ENCODE measurements at regions of chr1 and their contacts with region 1.

Region 1: DNA sequence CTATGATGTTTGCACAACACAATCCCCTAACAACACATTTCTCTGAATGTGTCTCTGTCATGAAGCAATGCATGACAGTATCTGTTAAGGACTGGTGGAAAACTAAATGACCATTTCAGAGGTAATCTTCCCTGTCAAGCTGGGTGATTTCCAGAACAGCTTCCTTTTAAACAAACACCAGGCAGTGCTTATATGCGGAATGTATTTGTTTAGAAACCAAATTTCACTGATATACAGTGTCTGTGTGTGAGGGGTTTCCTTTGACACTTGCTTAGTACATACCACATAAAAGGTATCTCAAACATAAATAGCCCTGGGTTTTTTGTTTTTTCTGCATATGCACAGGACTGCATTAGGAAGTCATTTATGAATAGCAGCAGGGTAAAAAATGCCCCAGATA is 95.6 kb downstream of the TGFBR3 start:
- DNase-seq: no peak
- ATAC-seq: no peak
- H3K4me3 ChIP-seq: no peak overlapping the region
- H3K27ac ChIP-seq: no peak overlapping the region
- H3K4me1 ChIP-seq: peaks cover 13% of the 10 kb centered on the region
- H3K27me3 ChIP-seq: no peaks in the 10 kb centered on the region
- CTCF ChIP-seq: no peak

Region 2: GRCh38 chr1:91693557-91693956 is 96.8 kb before region 1 on chr1:
- CTCF ChIA-PET with region 1: no interaction called
- POLR2A ChIA-PET with region 1: no interaction called
- in situ Hi-C with region 1: no loop called
- intact Hi-C with region 1: no loop called
- DNase-seq: no peak
- ATAC-seq: no peak
- H3K4me3 ChIP-seq: no peak overlapping the region
- H3K27ac ChIP-seq: peak overlapping the region; percentile 5; the same call in 1 of the 2 replicates
- H3K4me1 ChIP-seq: no peaks in the 10 kb centered on the region
- H3K27me3 ChIP-seq: no peaks in the 10 kb centered on the region
- CTCF ChIP-seq: no peak

Region 3: DNA sequence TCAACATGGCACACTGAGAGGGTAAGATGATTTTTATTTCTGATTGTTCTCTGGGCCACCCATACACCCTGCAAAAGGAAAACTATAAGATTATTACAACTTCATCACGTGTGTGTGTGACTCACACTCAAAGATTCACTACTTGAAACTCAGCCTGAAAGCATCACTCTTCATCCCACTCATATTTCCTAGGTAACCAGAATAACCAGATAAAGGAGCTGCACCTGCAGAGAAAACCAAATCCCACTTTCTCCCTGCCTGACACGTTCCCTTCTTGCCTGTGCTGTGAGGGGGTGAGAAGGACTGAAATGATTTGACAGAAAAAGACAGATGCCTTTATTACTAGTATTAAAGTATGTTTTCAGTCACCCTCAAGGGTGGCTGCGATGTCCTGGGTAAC is 36.0 kb before region 1 on chr1:
- CTCF ChIA-PET with region 1: no interaction called
- POLR2A ChIA-PET with region 1: no interaction called
- in situ Hi-C with region 1: no loop called
- intact Hi-C with region 1: no loop called
- DNase-seq: no peak
- ATAC-seq: no peak
- H3K4me3 ChIP-seq: no peak overlapping the region
- H3K27ac ChIP-seq: no peak overlapping the region
- H3K4me1 ChIP-seq: peaks cover 12% of the 10 kb centered on the region; the same call in 1 of the 2 replicates
- H3K27me3 ChIP-seq: no peaks in the 10 kb centered on the region
- CTCF ChIP-seq: no peak

Region 4: GRCh38 chr1:91770667-91771268 is 19.6 kb before region 1 on chr1:
- CTCF ChIA-PET with region 1: no interaction called
- POLR2A ChIA-PET with region 1: interaction called, 17 read pairs
- in situ Hi-C with region 1: no loop called
- intact Hi-C with region 1: no loop called
- DNase-seq: no peak
- ATAC-seq: no peak
- H3K4me3 ChIP-seq: no peak overlapping the region
- H3K27ac ChIP-seq: no peak overlapping the region
- H3K4me1 ChIP-seq: no peaks in the 10 kb centered on the region
- H3K27me3 ChIP-seq: no peaks in the 10 kb centered on the region
- CTCF ChIP-seq: no peak

Region 5: DNA sequence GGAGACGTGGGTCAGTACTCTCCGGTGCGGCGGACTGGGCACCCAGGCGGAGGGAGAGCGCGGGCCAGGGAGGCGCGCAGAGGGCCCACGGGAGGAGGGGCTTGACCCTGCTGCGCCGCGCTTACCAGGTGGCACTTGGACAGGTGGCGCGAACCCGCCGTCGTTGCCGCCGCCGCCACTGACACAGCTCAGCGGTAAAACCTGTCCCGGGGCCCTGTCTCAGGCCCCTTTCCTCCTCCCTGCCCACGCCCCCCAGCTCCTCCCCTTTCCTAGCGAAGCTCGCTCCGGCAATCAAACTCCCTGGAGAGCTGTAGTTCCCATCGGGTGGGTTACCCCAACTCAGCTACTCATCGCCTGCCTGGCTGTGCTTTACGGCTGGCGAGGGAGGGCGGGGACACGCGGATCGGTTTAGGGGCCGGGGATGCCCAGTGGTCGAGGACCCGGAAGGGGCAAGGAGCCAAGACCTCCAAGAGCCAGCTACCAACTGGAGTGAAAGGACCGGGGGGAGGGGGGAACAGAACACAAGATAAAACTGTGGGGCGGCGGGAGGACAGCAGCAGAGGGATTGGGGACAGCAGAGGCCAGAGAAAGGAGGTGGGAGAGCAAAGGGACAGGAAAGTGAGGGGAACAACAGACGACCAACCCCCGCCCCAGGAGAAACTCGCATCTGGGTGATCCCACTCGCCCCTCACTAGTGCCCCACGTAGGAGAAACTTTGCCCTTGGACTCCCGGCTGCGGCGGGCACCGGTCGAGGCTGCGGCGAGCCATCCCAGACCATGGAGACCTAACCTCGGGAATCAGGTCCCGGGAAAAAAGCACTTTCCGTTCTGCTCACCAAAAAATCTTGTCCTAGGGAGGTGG is 693.4 kb after region 1 on chr1:
- CTCF ChIA-PET with region 1: no interaction called
- POLR2A ChIA-PET with region 1: interaction called, 14 read pairs
- in situ Hi-C with region 1: no loop called
- intact Hi-C with region 1: no loop called
- DNase-seq: no peak
- ATAC-seq: peak; percentile 20; the same call in 1 of the 2 replicates
- H3K4me3 ChIP-seq: peak overlapping the region; percentile 37 to 52
- H3K27ac ChIP-seq: no peak overlapping the region
- H3K4me1 ChIP-seq: peaks cover 2% of the 10 kb centered on the region; the same call in 1 of the 2 replicates
- H3K27me3 ChIP-seq: peaks cover 8% of the 10 kb centered on the region
- CTCF ChIP-seq: no peak

Measured in Panc1 (cell line).